CD14-positive monocyte (primary cell): ENCODE measurements at regions of chr10 and their contacts with region 1.

Region 1: GRCh38 chr10:132536971-132537712 is 445 bp upstream of the INPP5A start:
- DNase-seq: peak; percentile 99
- H3K4me3 ChIP-seq: peak overlapping the region; percentile 20 to 74 (median 42)
- H3K4me3 Mint-ChIP-seq: peak overlapping the region; percentile 62 to 72
- H3K27ac ChIP-seq: peak overlapping the region in 1 of 2 donors; percentile 70
- H3K27ac Mint-ChIP-seq: no peak overlapping the region
- H3K4me1 ChIP-seq: peaks cover 47 to 58% of the 10 kb centered on the region in 2 donors
- H3K4me1 Mint-ChIP-seq: peaks cover 54% of the 10 kb centered on the region
- H3K27me3 ChIP-seq: no peaks in the 10 kb centered on the region
- H3K27me3 Mint-ChIP-seq: peaks cover 3 to 10% (median 8%) of the 10 kb centered on the region in 3 donors
- CTCF ChIP-seq: no peak

Region 2: GRCh38 chr10:132331526-132332432 is 205.4 kb before region 1 on chr10 and contains the start of gene LRRC27:
- intact Hi-C with region 1: loop called in 1 of 2 experiments (anchors 10 kb)
- DNase-seq: peak; percentile 94 to 99 (median 98)
- H3K4me3 ChIP-seq: peak within 1 kb of the TSS; percentile 95 to 97 (median 96)
- H3K4me3 Mint-ChIP-seq: peak within 1 kb of the TSS; percentile 86 to 96
- H3K27ac ChIP-seq: peak within 1 kb of the TSS; percentile 86 to 88
- H3K27ac Mint-ChIP-seq: peak within 1 kb of the TSS; percentile 87 to 96 (median 94)
- H3K4me1 ChIP-seq: peaks cover 73 to 76% of the 10 kb centered on the region in 2 donors
- H3K4me1 Mint-ChIP-seq: peaks cover 81% of the 10 kb centered on the region
- H3K27me3 ChIP-seq: no peaks in the 10 kb centered on the region
- H3K27me3 Mint-ChIP-seq: peaks cover 0 to 2% (median 0%) of the 10 kb centered on the region in 3 donors
- CTCF ChIP-seq: no peak
- polyA plus RNA-seq, gene LRRC27: 3.6 to 12.8 (median 3.6) TPM

Region 3: DNA sequence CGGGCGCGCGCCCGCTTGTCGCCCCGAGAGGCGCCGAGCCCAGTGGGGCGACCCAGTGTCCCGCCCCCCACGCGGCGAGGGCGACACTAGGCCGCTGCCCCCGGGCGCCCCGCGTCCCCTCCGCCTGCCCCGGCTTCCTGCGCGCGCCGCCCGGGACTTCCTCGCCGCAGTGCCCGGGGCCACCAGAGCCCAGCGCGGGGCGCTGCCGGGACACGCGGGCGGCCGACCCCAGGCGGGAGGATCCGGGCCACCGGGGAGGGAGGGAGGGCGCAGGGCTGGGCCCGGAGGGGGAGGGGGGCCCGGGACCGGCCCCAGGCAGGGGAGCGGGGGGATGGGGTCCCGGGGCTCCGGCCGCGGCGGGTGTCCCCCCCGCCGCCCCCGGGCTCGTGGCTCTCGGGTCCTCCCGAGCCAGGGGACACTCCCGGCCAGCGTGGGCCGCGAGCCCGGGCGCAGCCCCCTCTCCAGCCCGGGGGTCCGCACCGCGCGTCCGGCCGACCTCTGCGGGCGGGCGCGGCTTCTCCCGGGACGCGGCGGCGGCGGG is 140.6 kb before region 1 on chr10:
- intact Hi-C with region 1: loop called in 1 of 2 experiments (anchors 10 kb)
- DNase-seq: peak in 2 of 3 donors; percentile 62 to 67
- H3K4me3 ChIP-seq: peak overlapping the region; percentile 38 to 76 (median 55)
- H3K4me3 Mint-ChIP-seq: no peak overlapping the region
- H3K27ac ChIP-seq: peak overlapping the region; percentile 56 to 76
- H3K27ac Mint-ChIP-seq: peak overlapping the region in 1 of 7 donors; percentile 36
- H3K4me1 ChIP-seq: peaks cover 61 to 74% of the 10 kb centered on the region in 2 donors
- H3K4me1 Mint-ChIP-seq: peaks cover 58% of the 10 kb centered on the region
- H3K27me3 ChIP-seq: no peaks in the 10 kb centered on the region
- H3K27me3 Mint-ChIP-seq: peaks cover 5 to 10% (median 7%) of the 10 kb centered on the region in 3 donors
- CTCF ChIP-seq: peak; percentile 33

Region 4: DNA sequence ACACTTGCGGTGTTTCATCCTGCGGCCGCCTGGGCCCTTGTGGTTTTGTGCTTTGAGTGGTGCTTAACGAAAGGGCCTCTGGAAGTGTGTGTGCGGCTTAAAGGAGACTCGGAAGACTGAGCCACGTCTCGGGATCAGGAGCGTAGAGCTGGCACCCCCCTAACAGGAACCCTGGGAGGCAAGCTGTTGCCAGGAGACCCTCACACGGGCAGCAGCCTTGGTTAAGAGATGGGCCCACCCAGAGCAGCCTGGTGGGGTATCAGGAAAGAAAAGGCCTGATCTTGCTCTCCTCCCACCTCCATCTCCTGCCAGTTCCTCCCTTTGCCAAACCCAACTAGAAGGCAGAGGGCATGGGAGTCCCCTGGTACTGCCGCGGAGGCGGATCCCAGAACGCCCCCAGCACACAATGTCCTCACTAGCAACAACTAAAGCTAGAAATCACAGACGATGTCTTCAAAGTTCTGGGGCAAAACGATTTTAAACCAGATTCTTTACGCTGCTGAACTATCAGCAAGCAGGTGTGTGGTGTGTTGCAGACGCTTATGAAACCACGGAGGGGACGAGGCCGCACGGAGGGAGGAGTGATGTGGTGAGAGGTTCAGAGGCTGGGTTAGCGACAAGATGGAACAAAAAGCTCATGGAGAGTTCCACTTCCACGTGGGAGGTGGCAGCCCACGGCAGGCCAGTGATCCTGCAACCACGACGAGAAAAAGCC is 66.6 kb before region 1 on chr10:
- intact Hi-C with region 1: no loop called
- DNase-seq: no peak
- H3K4me3 ChIP-seq: no peak overlapping the region
- H3K4me3 Mint-ChIP-seq: no peak overlapping the region
- H3K27ac ChIP-seq: no peak overlapping the region
- H3K27ac Mint-ChIP-seq: no peak overlapping the region
- H3K4me1 ChIP-seq: no peaks in the 10 kb centered on the region
- H3K4me1 Mint-ChIP-seq: no peaks in the 10 kb centered on the region
- H3K27me3 ChIP-seq: peaks cover 0 to 2% of the 10 kb centered on the region in 2 donors
- H3K27me3 Mint-ChIP-seq: peaks cover 6 to 9% (median 7%) of the 10 kb centered on the region in 3 donors
- CTCF ChIP-seq: no peak

Region 5: DNA sequence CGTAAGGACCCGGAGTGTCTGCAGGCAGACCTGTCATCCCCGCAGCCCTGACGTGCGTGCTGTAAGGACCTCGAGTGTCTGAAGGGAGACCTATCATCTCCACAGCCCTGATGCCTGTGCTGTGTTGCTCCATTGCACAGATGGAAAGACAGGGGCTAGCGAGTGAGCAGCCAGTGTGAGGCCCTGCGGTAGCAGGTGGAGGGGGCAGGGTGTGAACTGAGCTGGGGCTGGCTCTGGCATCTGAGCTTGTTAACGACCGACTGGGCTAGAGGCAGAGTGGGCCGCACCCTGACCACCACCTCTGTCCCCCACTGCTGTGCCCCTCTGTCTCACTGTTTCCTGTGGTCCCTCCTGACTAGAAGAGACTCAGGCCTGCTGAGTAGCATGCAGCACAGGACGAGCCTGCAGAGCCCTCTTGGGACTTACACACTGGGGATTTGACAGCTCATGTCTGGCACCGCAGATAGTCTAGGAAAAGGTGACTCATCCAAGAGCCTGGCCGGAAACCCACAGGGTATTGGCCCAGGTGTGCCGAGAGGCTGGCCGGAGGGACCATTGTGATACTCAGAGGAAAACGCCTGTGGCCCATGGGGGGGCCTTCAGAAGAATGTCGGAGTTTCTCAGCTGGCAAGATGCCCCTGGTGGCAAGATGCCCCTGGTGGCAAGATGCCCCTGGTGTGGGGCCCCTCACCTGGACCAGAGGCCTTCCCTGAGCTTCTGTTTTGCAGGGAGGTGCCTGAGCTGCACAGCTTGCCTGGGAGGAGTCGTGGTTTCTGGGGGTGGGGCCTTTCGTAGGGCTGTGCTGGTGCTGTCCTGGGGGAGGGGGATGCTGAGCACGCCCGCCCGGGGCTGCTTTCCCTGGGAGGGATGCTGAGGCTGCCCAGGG is 34.8 kb after region 1 on chr10:
- intact Hi-C with region 1: loop called (anchors 5 kb)
- DNase-seq: peak; percentile 44 to 69 (median 62)
- H3K4me3 ChIP-seq: peak overlapping the region in 1 of 3 experiments; percentile 16
- H3K4me3 Mint-ChIP-seq: peak overlapping the region; percentile 2 to 64
- H3K27ac ChIP-seq: peak overlapping the region in 1 of 2 donors; percentile 46
- H3K27ac Mint-ChIP-seq: peak overlapping the region in 4 of 7 donors; percentile 26 to 85 (median 85)
- H3K4me1 ChIP-seq: peaks cover 52 to 53% of the 10 kb centered on the region in 2 donors
- H3K4me1 Mint-ChIP-seq: peaks cover 2% of the 10 kb centered on the region
- H3K27me3 ChIP-seq: no peaks in the 10 kb centered on the region
- H3K27me3 Mint-ChIP-seq: peaks cover 0 to 6% (median 0%) of the 10 kb centered on the region in 3 donors
- CTCF ChIP-seq: no peak

Region 6: GRCh38 chr10:132595854-132596253 is 58.7 kb after region 1 on chr10:
- intact Hi-C with region 1: no loop called
- DNase-seq: no peak
- H3K4me3 ChIP-seq: no peak overlapping the region
- H3K4me3 Mint-ChIP-seq: no peak overlapping the region
- H3K27ac ChIP-seq: no peak overlapping the region
- H3K27ac Mint-ChIP-seq: peak overlapping the region in 1 of 7 donors; percentile 3
- H3K4me1 ChIP-seq: peaks cover 44 to 56% of the 10 kb centered on the region in 2 donors
- H3K4me1 Mint-ChIP-seq: peaks cover 63% of the 10 kb centered on the region
- H3K27me3 ChIP-seq: no peaks in the 10 kb centered on the region
- H3K27me3 Mint-ChIP-seq: peaks cover 0 to 3% (median 2%) of the 10 kb centered on the region in 3 donors
- CTCF ChIP-seq: no peak

Region 7: GRCh38 chr10:132624847-132625471 is 87.8 kb after region 1 on chr10:
- intact Hi-C with region 1: loop called (anchors 5 to 10 kb)
- DNase-seq: no peak
- H3K4me3 ChIP-seq: no peak overlapping the region
- H3K4me3 Mint-ChIP-seq: peak overlapping the region in 1 of 2 donors; percentile 48
- H3K27ac ChIP-seq: no peak overlapping the region
- H3K27ac Mint-ChIP-seq: peak overlapping the region in 6 of 7 donors; percentile 11 to 89 (median 68)
- H3K4me1 ChIP-seq: peaks cover 22 to 31% of the 10 kb centered on the region in 2 donors
- H3K4me1 Mint-ChIP-seq: peaks cover 38% of the 10 kb centered on the region
- H3K27me3 ChIP-seq: no peaks in the 10 kb centered on the region
- H3K27me3 Mint-ChIP-seq: no peaks in the 10 kb centered on the region
- CTCF ChIP-seq: no peak